Naive thymus-derived CD4-positive, alpha-beta T cell (primary cell): ENCODE measurements at regions of chr20 and their contacts with region 1.

Region 1: DNA sequence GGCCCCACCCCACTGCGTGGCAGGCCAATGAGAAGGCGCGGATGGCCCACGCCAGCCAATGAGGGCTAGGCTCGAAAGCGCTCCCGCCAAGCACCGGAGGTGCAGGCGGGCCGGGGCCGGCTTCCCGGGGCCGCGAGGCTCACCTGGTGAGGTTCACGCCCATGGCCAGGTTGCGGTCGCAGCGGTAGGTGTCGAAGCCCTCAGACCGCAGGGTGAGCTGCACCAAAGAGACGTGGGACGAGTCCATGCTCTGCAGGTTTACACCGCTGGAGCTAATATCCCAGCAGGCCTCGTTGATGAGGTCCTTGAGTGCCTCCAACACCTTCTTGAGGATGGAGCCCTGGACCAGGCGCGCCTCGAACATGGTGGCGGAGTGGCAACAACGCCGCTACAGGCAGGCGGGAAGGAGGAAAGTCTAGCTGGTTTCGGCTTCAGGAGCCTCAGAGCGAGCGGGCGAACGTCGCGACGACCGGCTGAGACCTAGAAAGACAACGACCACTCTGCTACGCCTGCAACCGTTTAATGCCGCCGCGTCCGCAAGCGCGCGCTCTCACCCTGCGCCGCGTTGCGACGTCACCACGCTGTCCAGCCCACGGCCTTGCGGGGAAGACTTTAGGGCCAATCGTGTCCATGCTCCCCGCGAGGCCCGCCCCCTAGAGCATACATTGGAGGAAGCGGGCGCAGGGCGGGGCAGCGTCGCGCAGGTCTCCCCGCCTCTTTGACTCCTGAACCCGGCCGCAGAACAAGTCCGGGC is at the start of gene PCNA:
- DNase-seq: peak; percentile 85 to 96 (median 94)
- ATAC-seq: peak; percentile 97
- H3K4me3 ChIP-seq: peak within 1 kb of the TSS; percentile 98
- H3K4me3 Mint-ChIP-seq: peak within 1 kb of the TSS; percentile 87 to 99 (median 96)
- H3K27ac ChIP-seq: peak within 1 kb of the TSS; percentile 73
- H3K27ac Mint-ChIP-seq: peak within 1 kb of the TSS; percentile 82 to 99 (median 96)
- H3K4me1 ChIP-seq: peaks cover 9 to 22% of the 10 kb centered on the region in 2 donors
- H3K4me1 Mint-ChIP-seq: peaks cover 19 to 66% (median 32%) of the 10 kb centered on the region in 7 donors
- H3K27me3 ChIP-seq: no peaks in the 10 kb centered on the region
- H3K27me3 Mint-ChIP-seq: peaks cover 0 to 2% (median 0%) of the 10 kb centered on the region in 5 donors
- total RNA-seq, gene PCNA: 21.6 to 392 (median 39.3) TPM

Region 2: GRCh38 chr20:4835244-4836177 is 284.1 kb before region 1 on chr20:
- CTCF ChIA-PET with region 1: no interaction called
- POLR2A ChIA-PET with region 1: no interaction called
- intact Hi-C with region 1: no loop called
- DNase-seq: no peak
- ATAC-seq: no peak
- H3K4me3 ChIP-seq: no peak overlapping the region
- H3K4me3 Mint-ChIP-seq: no peak overlapping the region
- H3K27ac ChIP-seq: no peak overlapping the region
- H3K27ac Mint-ChIP-seq: peak overlapping the region in 1 of 9 donors; percentile 30
- H3K4me1 ChIP-seq: no peaks in the 10 kb centered on the region
- H3K4me1 Mint-ChIP-seq: peaks cover 0 to 6% (median 0%) of the 10 kb centered on the region in 7 donors
- H3K27me3 ChIP-seq: no peaks in the 10 kb centered on the region
- H3K27me3 Mint-ChIP-seq: peaks cover 0 to 8% (median 0%) of the 10 kb centered on the region in 5 donors

Region 3: GRCh38 chr20:5024982-5025381 is 94.6 kb before region 1 on chr20:
- CTCF ChIA-PET with region 1: no interaction called
- POLR2A ChIA-PET with region 1: no interaction called
- intact Hi-C with region 1: no loop called
- DNase-seq: no peak
- ATAC-seq: no peak
- H3K4me3 ChIP-seq: no peak overlapping the region
- H3K4me3 Mint-ChIP-seq: no peak overlapping the region
- H3K27ac ChIP-seq: no peak overlapping the region
- H3K27ac Mint-ChIP-seq: no peak overlapping the region
- H3K4me1 ChIP-seq: no peaks in the 10 kb centered on the region
- H3K4me1 Mint-ChIP-seq: peaks cover 0 to 2% (median 0%) of the 10 kb centered on the region in 7 donors
- H3K27me3 ChIP-seq: no peaks in the 10 kb centered on the region
- H3K27me3 Mint-ChIP-seq: no peaks in the 10 kb centered on the region

Region 4: GRCh38 chr20:5191829-5192569 is 72.4 kb after region 1 on chr20:
- CTCF ChIA-PET with region 1: interaction called, 60 read pairs
- POLR2A ChIA-PET with region 1: interaction called, 6 read pairs
- intact Hi-C with region 1: no loop called
- DNase-seq: peak in 7 of 9 donors; percentile 36 to 66 (median 54)
- ATAC-seq: peak; percentile 89
- H3K4me3 ChIP-seq: no peak overlapping the region
- H3K4me3 Mint-ChIP-seq: no peak overlapping the region
- H3K27ac ChIP-seq: peak overlapping the region; percentile 40
- H3K27ac Mint-ChIP-seq: peak overlapping the region in 8 of 9 donors; percentile 2 to 93 (median 80)
- H3K4me1 ChIP-seq: no peaks in the 10 kb centered on the region
- H3K4me1 Mint-ChIP-seq: peaks cover 0 to 18% (median 0%) of the 10 kb centered on the region in 7 donors
- H3K27me3 ChIP-seq: no peaks in the 10 kb centered on the region
- H3K27me3 Mint-ChIP-seq: no peaks in the 10 kb centered on the region